ENCODE measurements at regions of chr1 and their contacts with region 1.

Region 1: DNA sequence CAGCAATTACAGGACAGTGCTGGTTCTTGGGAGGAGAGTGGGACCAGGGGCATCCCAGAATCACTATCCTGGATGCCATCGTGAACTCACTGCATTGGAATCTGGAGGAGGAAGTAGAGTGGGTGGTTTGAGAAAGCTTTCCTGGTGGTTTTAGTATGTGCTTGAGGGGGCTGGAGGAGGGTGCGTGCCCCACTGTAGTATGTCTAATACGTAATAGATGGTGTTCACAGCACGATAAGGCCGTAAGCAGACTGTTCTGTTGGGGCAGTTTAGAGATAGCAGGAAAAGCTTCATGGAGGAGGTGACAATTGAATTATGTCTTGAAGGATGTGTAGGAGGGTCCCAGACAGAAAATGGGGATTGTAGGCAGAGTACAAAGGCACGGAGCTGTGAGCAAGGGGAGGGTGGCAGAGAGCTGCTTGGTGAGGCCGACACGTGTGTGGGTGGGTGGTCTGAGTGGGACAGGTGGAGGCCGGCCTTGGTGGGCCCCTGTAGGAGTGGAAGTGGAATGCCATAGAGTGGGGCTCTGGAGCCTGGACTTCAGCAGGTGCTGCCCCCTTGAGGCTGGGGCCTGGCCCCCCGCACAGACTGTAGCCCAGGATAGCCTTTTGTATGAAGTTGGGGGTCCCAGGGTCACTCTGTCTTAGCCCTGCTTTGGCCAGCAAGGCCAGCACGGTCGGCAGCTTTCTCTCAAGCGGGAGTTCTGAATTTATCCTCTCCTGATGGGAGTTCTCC is 37.0 kb downstream of the IL6R start:
- DNase-seq: no peak
- ATAC-seq: no peak
- H3K4me3 Mint-ChIP-seq: no peak overlapping the region
- H3K27ac Mint-ChIP-seq: no peak overlapping the region
- H3K4me1 Mint-ChIP-seq: peaks cover 16% of the 10 kb centered on the region
- H3K27me3 Mint-ChIP-seq: no peaks in the 10 kb centered on the region
- CTCF ChIP-seq: no peak

Region 2: DNA sequence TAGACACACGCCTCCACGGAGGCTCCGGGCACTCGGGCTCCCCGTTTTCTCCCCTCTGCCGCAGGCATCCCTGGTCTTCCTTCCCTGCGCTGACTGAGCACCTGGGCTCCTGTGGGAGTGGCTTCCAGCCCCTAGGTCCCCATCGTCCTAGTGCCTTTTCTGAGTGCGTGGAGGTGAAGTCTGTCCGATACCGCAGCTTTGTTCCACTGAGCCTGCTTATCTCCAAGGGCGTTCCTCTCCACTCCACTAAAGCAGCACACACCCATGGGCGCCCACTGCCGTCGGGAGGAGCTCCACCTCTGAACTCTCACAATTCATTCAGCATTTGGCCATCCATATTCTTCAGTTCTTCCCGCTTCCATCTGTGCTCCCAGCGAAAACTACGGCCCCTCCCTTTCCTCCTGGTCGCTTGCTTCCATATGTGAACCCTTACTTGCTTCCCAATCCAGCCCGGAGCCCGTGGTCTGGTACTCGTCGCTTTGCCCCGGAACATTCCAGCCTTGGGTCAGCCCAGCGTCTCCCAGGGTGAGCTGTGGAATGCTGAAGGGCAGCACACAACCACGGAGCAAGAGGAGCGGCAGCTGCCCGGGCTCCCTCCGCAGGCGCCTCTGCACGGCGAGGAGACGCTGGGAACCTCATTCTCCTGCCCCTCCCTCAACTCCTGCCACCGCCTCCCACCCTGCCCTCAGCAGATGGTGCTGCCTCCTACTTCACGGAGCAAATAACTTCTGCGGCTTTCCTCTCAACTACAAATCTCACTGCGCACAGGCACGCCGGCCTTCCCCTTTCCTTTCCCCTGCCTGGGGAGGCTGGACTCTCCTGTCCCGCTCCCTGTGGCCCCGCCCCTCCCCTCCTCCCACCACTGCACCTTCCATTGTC is 89.4 kb before region 1 on chr1:
- CTCF ChIA-PET with region 1: no interaction called
- POLR2A ChIA-PET with region 1: no interaction called
- intact Hi-C with region 1: loop called (anchors 5 kb)
- DNase-seq: peak; percentile 22
- ATAC-seq: peak; percentile 71
- H3K4me3 Mint-ChIP-seq: peak overlapping the region; percentile 80
- H3K27ac Mint-ChIP-seq: peak overlapping the region; percentile 41
- H3K4me1 Mint-ChIP-seq: peaks cover 18% of the 10 kb centered on the region
- H3K27me3 Mint-ChIP-seq: peaks cover 21% of the 10 kb centered on the region
- CTCF ChIP-seq: no peak

Region 3: GRCh38 chr1:154400373-154400801 is 41.8 kb before region 1 on chr1:
- CTCF ChIA-PET with region 1: no interaction called
- POLR2A ChIA-PET with region 1: no interaction called
- intact Hi-C with region 1: no loop called
- DNase-seq: no peak
- ATAC-seq: no peak
- H3K4me3 Mint-ChIP-seq: no peak overlapping the region
- H3K27ac Mint-ChIP-seq: no peak overlapping the region
- H3K4me1 Mint-ChIP-seq: peaks cover 13% of the 10 kb centered on the region
- H3K27me3 Mint-ChIP-seq: no peaks in the 10 kb centered on the region
- CTCF ChIP-seq: no peak